ENCODE measurements at regions of chr3 and their contacts with region 1.

Region 1: GRCh38 chr3:32374788-32375595 is 16.7 kb upstream of the CMTM7 start:
- DNase-seq: peak; percentile 63
- ATAC-seq: peak; percentile 88
- H3K4me3 ChIP-seq: no peak overlapping the region
- H3K27ac ChIP-seq: no peak overlapping the region
- H3K4me1 ChIP-seq: 0 out of 2 replicates have a peak, but pooled peaks cover under 1% of the 10 kb centered on the region
- H3K27me3 ChIP-seq: no peaks in the 10 kb centered on the region
- CTCF ChIP-seq: peak; percentile 72
- EP300 ChIP-seq: no peak
- POLR2A ChIP-seq: no peak
- RAD21 ChIP-seq: no peak

Region 2: GRCh38 chr3:32401556-32402081 is 26.6 kb after region 1 on chr3:
- CTCF ChIA-PET with region 1: interaction called, 10 read pairs
- POLR2A ChIA-PET with region 1: no interaction called
- in situ Hi-C with region 1: no loop called
- intact Hi-C with region 1: loop called (anchors 1 kb)
- DNase-seq: peak; percentile 46
- ATAC-seq: peak; percentile 96
- H3K4me3 ChIP-seq: peak overlapping the region; percentile 69 to 75 (median 73)
- H3K27ac ChIP-seq: peak overlapping the region; percentile 87
- H3K4me1 ChIP-seq: peaks cover 51% of the 10 kb centered on the region
- H3K27me3 ChIP-seq: no peaks in the 10 kb centered on the region
- CTCF ChIP-seq: no peak
- EP300 ChIP-seq: no peak
- POLR2A ChIP-seq: peak in 1 of 2 experiments; percentile 33; a peak in 1 of 4 replicates
- RAD21 ChIP-seq: peak; percentile 55; the same call in 1 of the 2 replicates